AG04449 (cell line): ENCODE measurements at regions of chr5 and their contacts with region 1.

Region 1: DNA sequence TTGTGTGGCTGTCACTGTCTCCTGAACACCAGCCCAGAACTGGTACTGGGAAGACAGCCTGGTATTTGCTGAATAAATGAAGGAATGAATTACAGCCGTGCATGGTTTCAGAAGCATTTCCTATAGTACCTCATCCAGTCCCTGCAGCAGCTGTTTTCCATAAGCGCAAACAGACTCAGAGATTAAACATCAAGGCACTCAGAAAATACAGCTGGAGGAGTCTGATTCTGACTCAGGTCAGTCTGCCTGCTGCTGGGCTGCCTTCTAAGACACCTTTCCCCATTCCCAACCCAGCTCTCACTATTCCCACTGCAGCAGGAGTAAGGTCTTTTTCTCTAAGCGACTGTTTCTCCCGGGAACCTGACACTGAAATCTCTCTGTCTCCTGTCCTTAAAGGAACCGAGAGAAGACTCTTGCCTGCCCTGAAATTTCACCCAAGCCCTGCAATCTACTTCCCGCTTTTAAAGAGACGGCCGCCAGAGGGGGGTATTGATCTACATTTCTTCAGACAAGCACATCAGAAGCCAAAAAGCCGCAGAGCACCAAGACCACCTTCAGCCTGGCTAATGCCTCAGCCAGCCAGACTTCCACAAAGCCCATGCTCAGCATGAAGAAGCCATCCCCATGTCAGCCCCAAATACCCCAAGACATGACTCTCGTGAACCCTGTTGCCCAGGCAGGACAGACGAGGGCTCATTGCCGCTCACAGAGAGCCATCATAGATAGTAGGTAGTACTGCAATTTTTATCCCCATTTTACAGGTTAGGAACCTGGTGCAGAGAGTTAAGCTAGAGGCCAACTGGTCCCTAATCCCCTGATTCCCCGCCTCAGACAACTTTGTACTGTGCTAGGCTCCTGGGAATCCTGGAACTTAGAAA is 5.4 kb upstream of the FOXI1 start:
- DNase-seq: peak; percentile 51
- H3K4me3 ChIP-seq: no peak overlapping the region
- CTCF ChIP-seq: peak; percentile 47

Region 2: DNA sequence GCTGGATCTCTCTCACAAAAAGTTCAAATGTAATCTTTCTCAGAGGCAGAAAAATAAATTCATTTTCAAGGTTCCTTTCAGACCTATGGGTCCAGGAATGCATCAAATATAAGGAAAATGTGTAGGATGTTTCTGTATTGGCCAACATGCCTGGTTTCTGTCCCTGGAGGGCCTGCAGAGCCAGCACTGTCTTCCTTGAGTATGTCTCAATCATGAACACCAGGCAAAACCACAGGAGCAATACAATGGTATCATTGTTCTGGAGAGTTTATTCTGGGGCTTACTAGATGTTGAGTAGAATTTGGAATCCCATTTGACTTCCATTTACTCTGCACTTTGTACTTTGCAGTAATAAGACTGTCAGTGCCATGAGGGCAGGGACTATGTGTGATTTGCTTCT is 143.5 kb before region 1 on chr5:
- CTCF ChIA-PET with region 1: no interaction called
- POLR2A ChIA-PET with region 1: no interaction called
- DNase-seq: no peak
- H3K4me3 ChIP-seq: no peak overlapping the region
- CTCF ChIP-seq: no peak

Region 3: GRCh38 chr5:170021506-170021905 is 78.8 kb before region 1 on chr5:
- CTCF ChIA-PET with region 1: no interaction called
- POLR2A ChIA-PET with region 1: no interaction called
- DNase-seq: no peak
- H3K4me3 ChIP-seq: no peak overlapping the region
- CTCF ChIP-seq: no peak

Region 4: GRCh38 chr5:170120576-170120975 is 20.3 kb after region 1 on chr5:
- CTCF ChIA-PET with region 1: interaction called, 10 read pairs
- POLR2A ChIA-PET with region 1: no interaction called
- DNase-seq: peak; percentile 90
- H3K4me3 ChIP-seq: no peak overlapping the region
- CTCF ChIP-seq: no peak

Region 5: DNA sequence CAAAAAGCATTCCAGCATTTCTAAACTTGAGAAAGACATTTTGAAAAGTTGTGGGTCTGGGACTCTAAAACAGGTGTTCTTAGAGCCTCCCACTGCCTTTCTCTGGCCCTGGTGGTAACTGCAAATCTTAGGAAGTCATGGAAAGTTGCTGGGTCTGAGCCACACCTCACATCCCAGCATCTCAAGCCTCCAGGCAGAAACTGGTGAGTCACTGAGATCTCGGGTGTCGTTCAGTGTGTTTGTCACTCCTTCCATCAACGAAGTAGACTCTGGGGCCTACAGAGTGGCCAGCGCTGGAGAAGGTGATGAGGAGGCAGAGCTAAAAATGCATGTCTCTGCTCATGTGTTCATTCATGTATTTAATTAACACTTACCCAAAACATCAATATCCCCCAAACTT is 72.9 kb after region 1 on chr5:
- CTCF ChIA-PET with region 1: interaction called, 46 read pairs
- POLR2A ChIA-PET with region 1: no interaction called
- DNase-seq: no peak
- H3K4me3 ChIP-seq: no peak overlapping the region
- CTCF ChIP-seq: no peak

Region 6: DNA sequence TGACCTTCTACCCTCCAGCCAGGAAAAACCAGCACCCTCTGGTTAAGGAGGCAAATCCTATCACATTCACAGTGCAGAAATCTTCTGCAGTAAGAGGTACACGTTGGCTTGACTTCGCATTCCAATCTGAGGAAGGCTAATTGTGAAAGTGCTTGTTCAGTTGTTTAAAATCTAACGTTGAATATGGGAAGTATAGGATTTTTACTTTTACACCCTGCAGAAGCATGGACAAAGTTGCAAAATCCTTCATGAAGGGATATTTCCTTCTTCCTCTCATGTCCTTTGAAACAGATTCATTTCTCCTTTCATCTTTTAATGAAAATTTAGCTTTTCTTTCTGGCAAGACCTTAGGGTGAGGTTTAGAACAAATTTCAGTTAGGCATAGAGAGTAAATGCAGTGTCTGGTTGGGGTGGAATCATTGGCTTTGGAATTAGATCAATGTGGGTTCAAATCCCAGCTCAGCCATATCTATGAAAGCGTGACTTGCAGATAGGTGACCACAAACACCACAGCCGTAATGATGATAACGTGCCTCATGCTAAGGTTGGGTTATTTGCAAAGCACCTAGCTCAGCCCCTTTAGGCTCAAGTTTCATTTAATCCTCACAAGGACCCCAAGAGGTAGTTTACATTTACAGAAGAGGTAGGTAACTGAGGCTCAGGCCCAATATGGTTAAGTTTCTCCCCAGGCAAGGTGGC is 90.3 kb after region 1 on chr5:
- CTCF ChIA-PET with region 1: interaction called, 257 read pairs
- POLR2A ChIA-PET with region 1: no interaction called
- DNase-seq: no peak
- H3K4me3 ChIP-seq: no peak overlapping the region
- CTCF ChIP-seq: no peak

Region 7: DNA sequence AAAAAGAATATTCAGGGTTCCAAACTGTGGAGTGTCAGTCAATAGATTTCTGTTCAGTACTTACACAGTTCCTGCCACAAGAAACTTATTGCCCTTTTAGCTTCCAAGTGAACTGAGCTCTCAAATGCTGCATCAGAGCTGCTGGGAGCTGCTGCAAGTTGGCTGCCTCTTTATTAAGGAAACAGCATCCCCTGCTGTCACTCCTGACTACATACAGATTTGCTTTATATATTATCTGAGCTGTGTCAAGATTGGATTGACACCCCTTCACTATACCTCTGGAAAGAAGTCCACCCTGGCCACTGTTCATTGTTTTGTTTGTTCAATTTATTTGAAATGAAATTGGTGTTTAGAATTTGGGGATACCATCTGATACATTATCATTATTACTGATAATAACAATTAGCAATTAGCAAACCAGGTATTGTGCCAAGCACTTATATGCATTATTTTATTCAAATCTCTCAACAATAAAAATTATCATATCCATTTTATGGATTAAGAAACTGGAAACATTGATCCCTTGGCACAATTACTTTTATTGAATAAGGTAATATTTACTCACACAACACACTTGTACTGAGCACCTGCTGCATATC is 116.1 kb after region 1 on chr5:
- CTCF ChIA-PET with region 1: interaction called, 112 read pairs
- POLR2A ChIA-PET with region 1: no interaction called
- DNase-seq: peak; percentile 24
- H3K4me3 ChIP-seq: no peak overlapping the region
- CTCF ChIP-seq: peak; percentile 59

Region 8: DNA sequence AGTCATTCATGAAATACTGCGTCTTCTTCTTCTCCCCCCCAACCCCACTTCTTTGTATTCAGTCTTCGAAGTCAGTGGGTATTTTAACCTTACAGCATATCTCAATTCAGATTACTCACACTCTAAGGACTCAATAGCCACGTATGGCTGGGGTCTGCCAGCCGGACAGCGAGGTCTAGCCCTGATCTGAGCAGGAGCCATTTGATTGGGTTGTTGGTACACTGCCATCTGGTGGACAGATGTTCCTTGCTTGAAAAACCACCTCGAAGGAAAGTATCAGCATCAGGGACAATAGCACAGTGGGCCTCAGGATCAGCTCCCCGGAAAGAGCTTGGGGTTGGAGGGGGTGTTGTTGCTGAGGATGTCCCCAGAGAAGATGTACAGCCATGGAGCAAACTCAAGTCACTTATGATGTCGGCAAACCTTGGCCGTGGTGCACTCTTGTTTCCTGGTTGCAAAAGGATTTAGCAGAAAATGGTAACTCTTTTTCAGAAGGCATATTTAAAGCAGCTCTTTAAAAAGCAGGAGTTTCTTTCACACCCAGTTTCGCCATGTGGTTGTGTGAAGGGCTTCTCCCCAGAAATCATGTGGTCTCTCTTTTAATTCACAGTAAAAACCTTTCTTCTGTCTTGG is 320.6 kb after region 1 on chr5:
- CTCF ChIA-PET with region 1: interaction called, 13 read pairs
- POLR2A ChIA-PET with region 1: no interaction called
- DNase-seq: peak; percentile 5
- H3K4me3 ChIP-seq: no peak overlapping the region
- CTCF ChIP-seq: peak; percentile 72